Gastrocnemius medialis (tissue), 4 donors: ENCODE measurements at regions of chr3 and their contacts with region 1.

Region 1: GRCh38 chr3:39724233-39724846 is 85.1 kb upstream of the MYRIP start:
- DNase-seq: no peak
- ATAC-seq: no peak
- H3K4me3 ChIP-seq: no peak overlapping the region
- H3K27ac ChIP-seq: no peak overlapping the region
- H3K4me1 ChIP-seq: no peaks in the 10 kb centered on the region
- H3K27me3 ChIP-seq: no peaks in the 10 kb centered on the region
- CTCF ChIP-seq: peak in 2 of 5 experiments; percentile 6 to 35
- POLR2A ChIP-seq: no peak

Region 2: DNA sequence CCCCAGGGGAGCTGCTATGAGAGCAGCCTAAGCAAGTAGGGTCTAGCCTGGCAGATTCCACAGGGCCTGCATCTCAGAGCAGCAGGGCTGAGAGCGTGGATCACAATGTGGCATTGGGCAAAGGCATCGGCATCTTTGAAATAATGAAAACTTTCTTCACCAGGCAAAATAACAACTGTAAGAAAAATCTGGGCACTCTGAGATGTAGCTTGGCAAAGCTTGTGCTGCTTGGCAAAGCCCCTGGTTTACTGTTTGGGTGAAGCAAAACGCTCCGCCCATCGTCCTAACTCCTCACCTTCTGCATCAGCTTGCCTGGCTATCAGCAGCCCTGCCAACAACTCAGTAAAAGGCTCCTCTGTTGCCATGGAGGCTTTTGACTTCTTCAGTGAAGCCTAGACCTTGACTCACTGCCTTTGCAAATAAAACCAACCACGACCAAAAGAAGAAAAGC is 372.3 kb after region 1 on chr3:
- in situ Hi-C with region 1: no loop called
- intact Hi-C with region 1: no loop called
- DNase-seq: no peak
- ATAC-seq: no peak
- H3K4me3 ChIP-seq: no peak overlapping the region
- H3K27ac ChIP-seq: no peak overlapping the region
- H3K4me1 ChIP-seq: no peaks in the 10 kb centered on the region
- H3K27me3 ChIP-seq: no peaks in the 10 kb centered on the region
- CTCF ChIP-seq: no peak
- POLR2A ChIP-seq: no peak

Region 3: DNA sequence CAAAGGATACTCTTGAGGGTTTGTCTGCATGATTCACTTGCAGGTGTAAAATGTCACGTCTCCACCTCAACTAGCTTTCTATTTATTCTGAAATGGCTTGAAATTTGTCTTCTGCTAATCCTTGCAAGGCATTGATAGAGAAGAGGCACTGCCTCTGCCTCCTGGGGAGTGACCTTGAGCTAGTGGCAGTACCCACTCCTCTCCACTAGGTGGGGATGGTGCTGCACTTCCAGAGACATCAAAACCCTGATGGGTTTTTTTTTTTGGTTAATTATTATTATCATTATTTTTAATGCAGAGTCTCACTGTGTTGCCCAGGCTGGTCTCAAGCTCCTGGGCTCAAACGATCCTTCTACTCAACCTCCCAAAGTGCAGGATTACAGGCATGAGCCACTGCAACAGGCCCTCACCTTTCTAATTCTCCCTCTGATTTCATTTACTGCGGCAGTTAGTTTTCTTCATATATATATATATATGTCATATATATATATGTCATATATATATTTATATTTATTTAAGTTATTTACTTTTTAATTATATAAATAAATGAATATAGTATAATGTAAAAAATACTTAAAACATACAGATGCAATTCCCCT is 467.6 kb after region 1 on chr3:
- in situ Hi-C with region 1: loop called in 3 of 4 experiments (anchors 10 to 25 kb)
- intact Hi-C with region 1: no loop called
- DNase-seq: no peak
- ATAC-seq: peak; percentile 34 to 70
- H3K4me3 ChIP-seq: no peak overlapping the region
- H3K27ac ChIP-seq: no peak overlapping the region
- H3K4me1 ChIP-seq: peaks cover 3 to 4% of the 10 kb centered on the region in 2 donors
- H3K27me3 ChIP-seq: no peaks in the 10 kb centered on the region
- CTCF ChIP-seq: peak; percentile 71 to 91 (median 76)
- POLR2A ChIP-seq: no peak